Activated naive CD4-positive, alpha-beta T cell treated with anti-CD3 and anti-CD28 coated beads for 36 hours (primary cell): ENCODE measurements at regions of chr17 and their contacts with region 1.

Region 1: DNA sequence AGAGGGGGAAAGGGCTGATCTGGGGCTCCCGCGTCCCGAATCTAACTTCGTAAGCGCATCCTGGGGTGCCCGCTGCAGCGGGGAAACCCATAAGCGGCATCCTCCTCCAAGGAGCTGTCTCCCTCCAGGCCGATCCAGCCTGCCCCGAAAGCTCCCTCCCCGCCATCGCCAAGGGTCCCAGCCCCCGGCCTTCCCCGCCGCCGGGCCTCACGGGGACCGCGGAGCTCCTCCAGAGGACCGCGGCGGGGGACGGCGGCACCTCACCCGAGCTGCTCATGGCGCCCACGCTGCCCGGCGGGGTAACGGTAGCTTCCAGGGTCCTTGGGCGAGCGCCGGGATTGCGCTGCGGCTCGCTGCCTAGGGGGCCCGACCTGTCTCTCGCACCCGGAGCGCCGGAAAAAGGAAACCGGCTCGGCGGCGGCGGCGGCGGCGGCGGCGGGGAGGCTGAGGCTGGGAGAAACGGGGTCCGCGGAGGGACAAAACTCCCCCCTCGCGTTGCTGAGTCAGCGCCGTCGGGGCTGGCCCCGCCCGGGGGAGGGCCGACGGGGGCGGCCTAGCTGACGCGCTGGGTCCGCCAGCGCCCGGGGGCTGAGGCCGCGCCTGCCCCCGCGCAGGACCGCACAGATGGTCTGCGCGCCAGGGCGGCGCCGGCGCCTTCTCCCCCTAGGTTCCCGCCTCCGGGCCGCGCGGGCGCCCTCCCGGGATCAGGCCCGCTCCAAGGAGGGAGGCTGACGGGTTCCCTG is at the start of gene BLMH:
- DNase-seq: peak; percentile 85
- H3K4me3 Mint-ChIP-seq: peak within 1 kb of the TSS; percentile 90
- H3K27ac Mint-ChIP-seq: peak within 1 kb of the TSS; percentile 87
- H3K4me1 Mint-ChIP-seq: peaks cover 16% of the 10 kb centered on the region
- H3K27me3 Mint-ChIP-seq: no peaks in the 10 kb centered on the region
- total RNA-seq, gene BLMH: 60.9 to 61.5 TPM

Region 2: DNA sequence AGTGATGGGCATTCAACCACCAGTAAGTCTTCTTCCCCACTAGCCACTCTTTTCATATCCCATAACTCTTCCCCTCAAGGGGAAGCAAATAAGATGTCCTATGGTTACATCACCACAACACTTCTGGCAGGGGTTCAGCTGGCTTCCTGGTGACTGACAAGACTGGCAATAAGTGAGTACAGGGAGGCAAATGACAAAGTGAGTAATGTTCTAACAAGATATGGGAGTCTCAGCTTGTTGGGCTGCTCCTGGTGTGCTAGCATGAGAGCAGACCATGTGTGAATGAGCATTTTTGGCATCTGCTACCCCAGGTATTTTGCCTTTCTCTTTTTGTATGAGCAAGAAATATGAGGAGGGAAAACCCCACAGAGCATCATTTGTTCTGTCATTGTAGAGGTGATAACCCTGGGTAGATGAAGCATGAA is 32.2 kb after region 1 on chr17:
- CTCF ChIA-PET with region 1: no interaction called
- intact Hi-C with region 1: loop called (anchors 1 kb)
- DNase-seq: peak; percentile 84
- H3K4me3 Mint-ChIP-seq: no peak overlapping the region
- H3K27ac Mint-ChIP-seq: peak overlapping the region; percentile 74
- H3K4me1 Mint-ChIP-seq: peaks cover 25% of the 10 kb centered on the region
- H3K27me3 Mint-ChIP-seq: no peaks in the 10 kb centered on the region

Region 3: DNA sequence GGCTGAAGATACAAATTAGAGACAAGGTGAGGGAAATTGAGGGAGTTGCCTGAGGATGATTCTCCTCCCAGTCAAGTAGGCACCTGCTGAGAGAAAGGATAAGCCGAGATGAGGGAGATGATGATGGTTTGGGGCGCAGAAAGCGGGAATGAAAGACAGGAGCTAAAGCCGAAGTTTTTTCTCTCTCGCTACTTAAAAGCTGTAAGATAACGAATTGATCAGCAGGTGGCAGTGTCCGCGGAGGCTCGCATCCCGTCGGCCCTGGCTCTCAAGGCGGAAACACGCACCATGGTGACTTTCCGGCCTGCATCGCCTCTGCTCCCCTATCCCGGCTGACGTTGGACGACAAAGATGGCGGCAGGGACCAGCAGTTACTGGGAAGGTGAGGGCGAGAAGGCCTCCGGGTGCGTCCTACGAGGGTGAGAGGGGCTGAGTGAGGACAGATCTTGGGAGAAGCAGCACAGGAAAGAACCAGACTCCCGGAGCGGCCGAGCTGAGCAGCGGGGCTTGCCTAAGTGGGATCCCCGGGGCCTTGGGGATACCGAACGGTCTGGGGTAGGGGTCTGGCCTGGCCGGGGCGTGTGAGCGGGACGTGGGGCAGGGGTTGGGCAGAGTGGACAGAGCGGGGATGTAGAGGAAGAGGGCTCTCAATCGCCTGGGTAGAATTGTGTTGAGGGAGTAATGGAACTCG is 185.5 kb after region 1 on chr17 and contains the start of gene GOSR1:
- CTCF ChIA-PET with region 1: interaction called, 7 read pairs
- intact Hi-C with region 1: loop called (anchors 1 kb)
- DNase-seq: peak; percentile 97
- H3K4me3 Mint-ChIP-seq: peak within 1 kb of the TSS; percentile 98
- H3K27ac Mint-ChIP-seq: peak within 1 kb of the TSS; percentile 97
- H3K4me1 Mint-ChIP-seq: peaks cover 36% of the 10 kb centered on the region
- H3K27me3 Mint-ChIP-seq: peaks cover 2% of the 10 kb centered on the region
- total RNA-seq, gene GOSR1: 33.9 to 37.3 TPM

Region 4: DNA sequence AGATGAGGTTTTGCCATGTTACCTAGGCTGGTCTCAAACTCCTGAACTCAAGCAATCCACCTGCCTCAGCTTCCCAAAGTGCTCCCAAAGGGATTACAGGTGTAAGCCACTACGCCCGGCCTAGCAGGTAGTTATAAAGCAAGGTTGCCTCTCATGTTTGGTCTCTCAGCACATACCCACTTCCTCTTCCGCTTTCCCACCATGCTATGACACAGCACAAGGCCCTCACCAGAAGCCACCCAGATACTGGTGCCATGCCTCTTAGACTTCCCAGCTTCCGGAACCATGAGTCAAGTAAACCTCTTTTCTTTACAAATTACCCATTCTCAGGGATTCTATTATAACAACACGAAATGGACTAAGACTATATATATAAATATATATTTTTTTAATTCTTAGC is 1423.7 kb after region 1 on chr17:
- CTCF ChIA-PET with region 1: no interaction called
- intact Hi-C with region 1: no loop called
- DNase-seq: no peak
- H3K4me3 Mint-ChIP-seq: no peak overlapping the region
- H3K27ac Mint-ChIP-seq: no peak overlapping the region
- H3K4me1 Mint-ChIP-seq: no peaks in the 10 kb centered on the region
- H3K27me3 Mint-ChIP-seq: no peaks in the 10 kb centered on the region